Ascending aorta (tissue), 2 donors: ENCODE measurements at regions of chr2 and their contacts with region 1.

Region 1: GRCh38 chr2:43611987-43612894 is 16.4 kb upstream of the THADA start:
- DNase-seq: peak in 1 of 2 donors; percentile 86
- H3K4me3 ChIP-seq: no peak overlapping the region
- H3K27ac ChIP-seq: no peak overlapping the region
- H3K4me1 ChIP-seq: peaks cover 0 to 3% of the 10 kb centered on the region in 2 donors
- H3K27me3 ChIP-seq: no peaks in the 10 kb centered on the region
- CTCF ChIP-seq: peak; percentile 70 to 80 (median 70)

Region 2: GRCh38 chr2:43637030-43637803 is 25.0 kb after region 1 on chr2 and contains the start of gene PLEKHH2:
- intact Hi-C with region 1: no loop called
- DNase-seq: peak; percentile 58 to 95
- H3K4me3 ChIP-seq: peak within 1 kb of the TSS; percentile 94 to 95
- H3K27ac ChIP-seq: peak within 1 kb of the TSS; percentile 74 to 88
- H3K4me1 ChIP-seq: peaks cover 0 to 4% of the 10 kb centered on the region in 2 donors
- H3K27me3 ChIP-seq: no peaks in the 10 kb centered on the region
- CTCF ChIP-seq: no peak
- total RNA-seq, gene PLEKHH2: 15.0 TPM

Region 3: GRCh38 chr2:43707255-43708015 is 95.2 kb after region 1 on chr2:
- intact Hi-C with region 1: loop called (anchors 10 kb)
- DNase-seq: peak in 1 of 2 donors; percentile 66
- H3K4me3 ChIP-seq: no peak overlapping the region
- H3K27ac ChIP-seq: no peak overlapping the region
- H3K4me1 ChIP-seq: no peaks in the 10 kb centered on the region
- H3K27me3 ChIP-seq: no peaks in the 10 kb centered on the region
- CTCF ChIP-seq: no peak

Region 4: DNA sequence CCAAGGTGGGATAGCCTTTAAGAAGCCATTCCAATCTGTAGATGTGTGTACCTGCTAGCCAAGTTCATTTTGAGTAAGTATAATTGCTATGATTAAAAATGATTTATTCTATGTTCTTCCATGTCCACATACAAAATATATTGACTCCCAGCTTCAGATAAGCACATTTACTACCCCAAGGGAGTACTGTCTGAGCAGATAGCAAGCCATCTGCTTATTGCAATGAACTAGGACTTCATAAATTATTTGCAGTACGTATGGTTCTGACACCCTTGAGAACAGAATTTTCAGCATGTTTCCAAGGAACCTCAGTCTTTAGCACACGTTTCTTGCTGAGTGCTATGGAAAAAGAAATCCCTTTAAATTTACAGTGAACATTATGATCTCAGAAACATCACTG is 198.2 kb after region 1 on chr2:
- intact Hi-C with region 1: no loop called
- DNase-seq: no peak
- H3K4me3 ChIP-seq: no peak overlapping the region
- H3K27ac ChIP-seq: no peak overlapping the region
- H3K4me1 ChIP-seq: no peaks in the 10 kb centered on the region
- H3K27me3 ChIP-seq: no peaks in the 10 kb centered on the region
- CTCF ChIP-seq: no peak

Region 5: DNA sequence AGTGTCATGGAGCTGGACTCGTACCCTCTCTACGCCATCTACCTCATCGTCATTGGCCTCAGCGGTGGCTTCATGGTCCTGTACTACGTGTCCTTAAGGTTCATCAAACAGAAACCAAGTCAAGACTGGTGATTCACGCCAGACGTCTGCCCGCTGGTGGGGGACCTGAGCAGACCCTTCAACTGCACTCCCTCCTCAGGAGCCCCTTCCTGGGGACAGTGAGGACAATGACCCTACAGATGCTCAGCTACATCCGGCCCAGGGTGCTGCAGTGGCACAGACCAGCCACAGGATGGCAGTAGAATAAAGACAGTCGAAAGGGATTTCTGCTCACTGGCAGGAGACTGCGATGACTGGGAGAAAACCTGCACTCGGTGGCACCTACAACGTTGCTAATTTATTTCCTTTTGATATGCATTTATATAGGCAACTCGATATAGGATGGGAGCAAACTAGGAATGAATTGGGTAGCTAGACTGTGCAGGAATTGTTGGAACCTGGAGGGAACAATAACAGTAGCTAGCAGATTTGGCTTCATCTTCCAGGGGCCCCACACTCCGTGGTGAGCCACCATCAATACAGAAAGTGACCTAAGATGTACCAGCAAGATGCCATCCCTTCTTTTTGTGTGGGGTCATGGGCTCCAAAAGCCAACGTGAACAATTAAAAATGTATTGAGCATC is 265.7 kb after region 1 on chr2:
- intact Hi-C with region 1: loop called (anchors 5 kb)
- DNase-seq: peak in 1 of 2 donors; percentile 72
- H3K4me3 ChIP-seq: no peak overlapping the region
- H3K27ac ChIP-seq: no peak overlapping the region
- H3K4me1 ChIP-seq: no peaks in the 10 kb centered on the region
- H3K27me3 ChIP-seq: no peaks in the 10 kb centered on the region
- CTCF ChIP-seq: peak; percentile 51 to 91 (median 89)